Activated CD4-positive, alpha-beta T cell treated with anti-CD3 and anti-CD28 coated beads for 36 hours (primary cell): ENCODE measurements at regions of chr6 and their contacts with region 1.

Region 1: DNA sequence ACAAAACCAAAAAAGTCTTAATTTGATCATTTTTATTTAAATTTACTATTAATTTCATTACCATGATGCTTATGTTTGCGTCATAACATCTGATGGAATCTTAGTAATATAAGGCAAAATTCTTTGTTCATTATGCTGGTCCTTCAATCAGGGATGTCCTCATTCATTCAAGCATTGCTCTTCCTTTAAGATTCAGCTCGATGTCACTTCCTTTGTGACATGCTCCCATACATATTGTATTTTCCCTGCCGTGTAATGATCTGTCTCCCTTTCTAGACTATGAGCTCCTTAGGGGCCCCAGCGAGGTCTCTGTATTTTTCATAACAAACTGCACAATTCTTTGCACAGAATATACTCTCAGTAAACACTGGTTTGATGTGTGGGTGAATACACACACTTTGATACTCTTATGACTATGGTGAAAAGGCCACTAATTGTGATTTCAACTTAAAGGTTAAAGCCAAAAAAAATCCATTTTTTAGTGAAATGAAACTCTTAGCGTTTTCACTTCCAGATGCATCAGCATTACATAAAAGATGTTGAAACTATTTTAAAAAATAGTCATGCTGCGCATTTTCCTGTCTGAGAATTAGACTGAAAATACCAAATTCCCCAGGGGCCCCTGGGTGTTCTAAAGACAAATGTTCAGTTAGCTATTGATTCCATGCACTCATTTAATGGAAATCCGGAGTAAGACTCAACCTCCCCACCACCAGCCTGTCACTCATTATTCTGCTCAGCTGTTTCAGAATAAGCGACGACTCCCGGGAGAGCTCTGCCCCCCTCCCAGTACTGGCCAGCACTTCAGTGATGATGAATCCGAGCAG is 169.7 kb downstream of the ATXN1 start:
- DNase-seq: peak; percentile 61
- ATAC-seq: peak; percentile 87
- H3K4me3 Mint-ChIP-seq: no peak overlapping the region
- H3K27ac Mint-ChIP-seq: peak overlapping the region; percentile 78
- H3K4me1 Mint-ChIP-seq: peaks cover 19% of the 10 kb centered on the region
- H3K27me3 Mint-ChIP-seq: no peaks in the 10 kb centered on the region

Region 2: DNA sequence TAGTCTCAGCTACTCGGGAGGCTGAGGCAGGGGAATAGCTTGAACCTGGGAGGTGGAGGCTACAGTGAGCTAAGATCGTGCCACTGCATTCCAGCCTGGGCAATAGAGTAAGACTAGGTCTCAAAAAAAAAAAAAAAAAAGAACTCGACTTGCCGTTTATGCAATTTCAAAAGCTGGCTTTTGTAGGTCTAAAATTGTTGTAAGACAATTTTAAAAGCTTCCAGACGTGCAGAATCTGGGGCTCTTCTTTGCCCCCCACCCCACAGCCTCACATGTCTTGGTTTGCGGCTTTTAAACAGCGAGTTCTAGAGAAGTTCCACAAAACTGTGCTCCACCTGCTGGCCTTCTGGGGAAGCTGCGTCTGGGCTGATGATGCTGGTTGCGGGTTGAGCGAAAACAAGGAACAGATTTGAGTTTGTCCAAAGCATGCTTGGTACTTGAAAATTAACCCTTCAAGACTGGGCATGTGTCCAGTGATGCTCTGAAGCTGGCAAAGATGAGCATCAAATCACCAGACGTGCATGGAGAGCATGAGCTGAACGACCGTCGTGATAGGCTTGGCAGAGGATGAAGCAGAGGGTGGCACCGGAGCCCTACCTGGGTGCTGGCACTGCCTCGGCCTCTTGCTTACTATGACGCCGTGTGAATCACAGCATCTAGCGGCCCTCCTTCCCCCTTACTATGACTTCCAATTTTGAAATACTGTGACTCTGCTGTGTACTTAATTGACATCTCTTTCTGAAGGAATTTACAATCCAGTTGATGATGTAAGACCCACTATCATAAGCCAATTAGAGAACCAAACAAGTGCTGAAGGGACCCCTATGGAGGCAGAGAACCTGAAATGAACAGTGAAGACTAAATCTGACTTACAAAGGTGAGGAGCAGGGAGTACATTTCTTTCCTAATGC is 181.8 kb before region 1 on chr6:
- CTCF ChIA-PET with region 1: no interaction called
- POLR2A ChIA-PET with region 1: interaction called, 7 read pairs
- intact Hi-C with region 1: loop called in 1 of 2 experiments (anchors 5 kb)
- DNase-seq: peak; percentile 77
- ATAC-seq: peak; percentile 50
- H3K4me3 Mint-ChIP-seq: no peak overlapping the region
- H3K27ac Mint-ChIP-seq: peak overlapping the region; percentile 30
- H3K4me1 Mint-ChIP-seq: peaks cover 41% of the 10 kb centered on the region
- H3K27me3 Mint-ChIP-seq: no peaks in the 10 kb centered on the region

Region 3: GRCh38 chr6:16602035-16602434 is 10.4 kb after region 1 on chr6:
- CTCF ChIA-PET with region 1: no interaction called
- POLR2A ChIA-PET with region 1: interaction called, 3 read pairs
- intact Hi-C with region 1: loop called in 1 of 2 experiments (anchors 1 kb)
- DNase-seq: peak; percentile 78
- ATAC-seq: peak; percentile 99
- H3K4me3 Mint-ChIP-seq: no peak overlapping the region
- H3K27ac Mint-ChIP-seq: peak overlapping the region; percentile 55
- H3K4me1 Mint-ChIP-seq: peaks cover 42% of the 10 kb centered on the region
- H3K27me3 Mint-ChIP-seq: peaks cover 3% of the 10 kb centered on the region

Region 4: GRCh38 chr6:16698997-16699868 is 107.6 kb after region 1 on chr6:
- CTCF ChIA-PET with region 1: interaction called, 3 read pairs
- POLR2A ChIA-PET with region 1: interaction called, 4 read pairs
- intact Hi-C with region 1: loop called in 1 of 2 experiments (anchors 5 kb)
- DNase-seq: peak; percentile 45
- ATAC-seq: peak; percentile 63
- H3K4me3 Mint-ChIP-seq: peak overlapping the region; percentile 69
- H3K27ac Mint-ChIP-seq: peak overlapping the region; percentile 95
- H3K4me1 Mint-ChIP-seq: peaks cover 75% of the 10 kb centered on the region
- H3K27me3 Mint-ChIP-seq: no peaks in the 10 kb centered on the region

Region 5: DNA sequence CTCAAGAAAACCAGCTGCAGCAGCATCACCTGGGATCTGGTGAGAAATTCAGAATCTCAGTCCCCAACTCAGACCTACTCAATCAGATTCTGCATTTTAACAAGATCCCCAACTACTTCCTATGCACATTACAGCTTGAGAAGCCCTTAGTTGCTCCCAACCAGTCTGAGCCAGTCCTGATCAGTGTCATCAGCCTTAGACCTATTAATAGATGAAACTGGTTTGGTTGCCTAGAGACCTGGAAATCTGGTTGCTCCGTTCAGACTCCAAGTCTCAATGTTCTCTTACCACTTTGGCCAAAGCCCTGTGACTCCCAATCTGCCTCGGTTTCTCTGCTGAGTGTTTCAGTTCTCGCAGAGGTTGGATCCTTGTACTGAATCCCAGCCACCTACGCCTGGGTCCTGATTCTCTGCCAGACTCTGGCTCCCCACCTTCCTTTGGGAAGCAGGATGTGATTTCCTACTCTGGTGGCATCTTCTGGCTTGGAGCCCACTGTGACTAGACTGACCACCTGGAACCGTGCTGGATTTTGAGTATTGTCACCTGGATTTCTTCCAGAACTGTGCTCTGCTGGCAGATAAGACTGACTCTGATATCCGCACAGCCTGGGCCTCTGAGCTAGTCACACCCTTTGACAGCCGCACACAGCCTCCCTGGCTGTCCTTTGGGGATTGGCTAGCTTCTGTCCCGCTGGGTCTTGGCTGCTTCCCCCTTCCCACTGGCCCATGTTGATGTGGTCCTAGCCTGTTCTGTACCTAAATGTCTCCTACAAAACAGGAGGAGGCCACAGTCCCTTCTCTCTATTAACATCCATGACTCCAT is 189.9 kb after region 1 on chr6:
- CTCF ChIA-PET with region 1: no interaction called
- POLR2A ChIA-PET with region 1: no interaction called
- intact Hi-C with region 1: no loop called
- DNase-seq: no peak
- ATAC-seq: no peak
- H3K4me3 Mint-ChIP-seq: no peak overlapping the region
- H3K27ac Mint-ChIP-seq: no peak overlapping the region
- H3K4me1 Mint-ChIP-seq: no peaks in the 10 kb centered on the region
- H3K27me3 Mint-ChIP-seq: peaks cover 2% of the 10 kb centered on the region